Activated CD4-positive, alpha-beta T cell treated with anti-CD3 and anti-CD28 coated beads for 36 hours (primary cell): ENCODE measurements at regions of chr9 and their contacts with region 1.

Region 1: GRCh38 chr9:112002131-112002846 is 105.7 kb downstream of the UGCG start:
- DNase-seq: peak; percentile 29
- ATAC-seq: peak; percentile 69
- H3K4me3 Mint-ChIP-seq: no peak overlapping the region
- H3K27ac Mint-ChIP-seq: no peak overlapping the region
- H3K4me1 Mint-ChIP-seq: peaks cover 36% of the 10 kb centered on the region
- H3K27me3 Mint-ChIP-seq: peaks cover 6% of the 10 kb centered on the region

Region 2: GRCh38 chr9:111926421-111926875 is 75.8 kb before region 1 on chr9:
- CTCF ChIA-PET with region 1: no interaction called
- POLR2A ChIA-PET with region 1: interaction called, 14 read pairs
- intact Hi-C with region 1: no loop called
- DNase-seq: peak; percentile 68
- ATAC-seq: peak; percentile 96
- H3K4me3 Mint-ChIP-seq: no peak overlapping the region
- H3K27ac Mint-ChIP-seq: no peak overlapping the region
- H3K4me1 Mint-ChIP-seq: peaks cover 25% of the 10 kb centered on the region
- H3K27me3 Mint-ChIP-seq: no peaks in the 10 kb centered on the region